CD4-positive, alpha-beta memory T cell (primary cell): ENCODE measurements at regions of chr2 and their contacts with region 1.

Region 1: DNA sequence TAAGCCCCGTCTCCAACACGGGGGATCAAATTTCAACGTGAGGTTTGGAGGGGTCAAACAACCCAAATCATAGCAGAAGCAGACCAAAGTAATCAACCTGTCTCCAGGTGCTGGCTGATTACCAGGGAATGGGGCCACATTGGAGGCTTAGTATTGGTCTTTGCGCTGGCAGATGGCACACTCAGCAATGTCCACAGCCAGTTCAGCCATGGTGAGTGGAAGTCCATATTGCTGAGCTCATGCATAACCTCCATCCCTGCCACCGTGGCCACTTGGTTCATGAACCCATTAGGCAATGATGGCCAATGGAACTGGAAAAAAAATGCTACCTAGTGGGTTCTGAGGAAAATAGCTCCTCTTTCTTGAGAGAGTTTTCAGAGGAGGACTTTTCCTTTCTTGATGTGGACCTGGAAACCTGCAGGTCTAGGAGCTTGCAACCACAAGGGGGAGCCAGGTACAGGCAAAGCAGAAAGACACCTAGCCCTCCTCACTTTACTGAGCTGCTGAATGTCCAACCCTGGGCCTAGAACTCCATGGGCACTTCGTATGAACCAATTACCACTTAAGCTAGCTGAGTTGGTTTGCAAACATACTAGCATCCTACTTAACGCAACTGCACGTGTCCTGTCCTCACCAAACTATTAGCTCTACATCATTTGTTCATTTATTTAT is 128.0 kb upstream of the GYPC start:
- DNase-seq: peak; percentile 57 to 68 (median 63)
- H3K4me3 ChIP-seq: no peak overlapping the region
- H3K4me3 Mint-ChIP-seq: no peak overlapping the region
- H3K27ac ChIP-seq: no peak overlapping the region
- H3K27ac Mint-ChIP-seq: no peak overlapping the region
- H3K4me1 ChIP-seq: no peaks in the 10 kb centered on the region
- H3K4me1 Mint-ChIP-seq: no peaks in the 10 kb centered on the region
- H3K27me3 ChIP-seq: no peaks in the 10 kb centered on the region
- H3K27me3 Mint-ChIP-seq: peaks cover 0 to 3% of the 10 kb centered on the region in 2 donors

Region 2: DNA sequence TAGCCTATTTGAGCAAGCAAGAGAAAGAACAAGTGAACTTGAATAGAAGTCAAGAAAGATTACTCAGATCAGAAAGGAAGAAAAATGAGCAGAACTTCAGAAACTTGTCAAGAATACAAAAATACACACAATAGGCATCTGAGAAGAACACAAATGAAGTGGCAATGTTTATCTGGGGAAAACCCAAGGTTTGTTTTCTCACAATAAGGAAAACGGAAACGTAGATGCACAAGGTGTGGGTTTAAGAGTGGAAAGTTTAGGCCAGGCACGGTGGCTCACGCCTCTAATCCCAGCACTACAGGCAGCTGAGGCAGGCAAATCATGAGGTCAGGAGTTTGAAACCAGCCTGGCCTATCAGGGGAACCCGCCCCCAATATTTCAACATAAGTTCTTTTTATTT is 31.5 kb before region 1 on chr2:
- CTCF ChIA-PET with region 1: no interaction called
- POLR2A ChIA-PET with region 1: no interaction called
- intact Hi-C with region 1: no loop called
- DNase-seq: no peak
- H3K4me3 ChIP-seq: no peak overlapping the region
- H3K4me3 Mint-ChIP-seq: no peak overlapping the region
- H3K27ac ChIP-seq: no peak overlapping the region
- H3K27ac Mint-ChIP-seq: peak overlapping the region in 1 of 7 donors; percentile 7
- H3K4me1 ChIP-seq: no peaks in the 10 kb centered on the region
- H3K4me1 Mint-ChIP-seq: no peaks in the 10 kb centered on the region
- H3K27me3 ChIP-seq: no peaks in the 10 kb centered on the region
- H3K27me3 Mint-ChIP-seq: peaks cover 8 to 20% of the 10 kb centered on the region in 2 donors

Region 3: GRCh38 chr2:126657636-126658318 is 129.8 kb after region 1 on chr2:
- CTCF ChIA-PET with region 1: interaction called, 15 read pairs
- POLR2A ChIA-PET with region 1: interaction called, 3 read pairs
- intact Hi-C with region 1: loop called (anchors 2 kb)
- DNase-seq: peak; percentile 61 to 87 (median 74)
- H3K4me3 ChIP-seq: peak overlapping the region; percentile 79 to 96
- H3K4me3 Mint-ChIP-seq: peak overlapping the region; percentile 96 to 99 (median 98)
- H3K27ac ChIP-seq: peak overlapping the region; percentile 78
- H3K27ac Mint-ChIP-seq: peak overlapping the region; percentile 96 to 99 (median 97)
- H3K4me1 ChIP-seq: peaks cover 58% of the 10 kb centered on the region
- H3K4me1 Mint-ChIP-seq: peaks cover 42 to 77% (median 63%) of the 10 kb centered on the region in 4 donors
- H3K27me3 ChIP-seq: no peaks in the 10 kb centered on the region
- H3K27me3 Mint-ChIP-seq: no peaks in the 10 kb centered on the region

Region 4: DNA sequence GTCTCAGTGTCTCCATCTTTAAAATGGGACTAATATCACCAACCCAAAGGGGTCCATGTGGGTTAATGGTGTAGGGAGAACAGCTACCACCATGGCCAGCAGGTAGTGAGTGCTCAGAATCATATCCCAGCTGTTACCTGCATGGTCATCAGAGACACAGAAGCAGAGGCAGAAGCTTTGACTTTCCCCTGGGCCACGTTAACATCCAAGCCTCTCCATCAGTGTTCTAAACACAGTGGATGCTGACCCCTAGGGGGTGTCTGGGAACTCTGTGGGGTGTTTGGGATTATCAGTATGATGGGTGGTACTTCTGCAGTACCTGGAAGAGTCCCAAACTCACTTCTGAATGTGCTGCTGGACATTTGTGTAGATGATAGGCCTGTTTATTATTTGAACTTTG is 221.6 kb after region 1 on chr2:
- CTCF ChIA-PET with region 1: interaction called, 25 read pairs
- POLR2A ChIA-PET with region 1: no interaction called
- intact Hi-C with region 1: loop called (anchors 1 kb)
- DNase-seq: no peak
- H3K4me3 ChIP-seq: no peak overlapping the region
- H3K4me3 Mint-ChIP-seq: no peak overlapping the region
- H3K27ac ChIP-seq: no peak overlapping the region
- H3K27ac Mint-ChIP-seq: peak overlapping the region in 1 of 7 donors; percentile 53
- H3K4me1 ChIP-seq: peaks cover 4% of the 10 kb centered on the region
- H3K4me1 Mint-ChIP-seq: peaks cover 1 to 8% (median 7%) of the 10 kb centered on the region in 4 donors
- H3K27me3 ChIP-seq: no peaks in the 10 kb centered on the region
- H3K27me3 Mint-ChIP-seq: no peaks in the 10 kb centered on the region

Region 5: GRCh38 chr2:126776692-126777619 is 249.0 kb after region 1 on chr2:
- CTCF ChIA-PET with region 1: interaction called, 234 read pairs
- POLR2A ChIA-PET with region 1: interaction called, 12 read pairs
- intact Hi-C with region 1: no loop called
- DNase-seq: peak; percentile 65 to 79 (median 79)
- H3K4me3 ChIP-seq: peak overlapping the region; percentile 76 to 88
- H3K4me3 Mint-ChIP-seq: peak overlapping the region; percentile 89 to 97 (median 93)
- H3K27ac ChIP-seq: peak overlapping the region; percentile 42
- H3K27ac Mint-ChIP-seq: peak overlapping the region; percentile 19 to 92 (median 77)
- H3K4me1 ChIP-seq: peaks cover 5% of the 10 kb centered on the region
- H3K4me1 Mint-ChIP-seq: peaks cover 9 to 20% (median 11%) of the 10 kb centered on the region in 4 donors
- H3K27me3 ChIP-seq: no peaks in the 10 kb centered on the region
- H3K27me3 Mint-ChIP-seq: peaks cover 7% of the 10 kb centered on the region in 2 donors